ENCODE measurements at regions of chr12 and their contacts with region 1.

Region 1: GRCh38 chr12:94721173-94721572 is 70.8 kb upstream of the TMCC3 start:
- DNase-seq: peak; percentile 75
- ATAC-seq: peak; percentile 92
- H3K4me3 ChIP-seq: 0 out of 2 replicates have a peak overlapping the region, but pooled peaks have one; percentile 8
- H3K27ac ChIP-seq: peak overlapping the region; percentile 63
- H3K4me1 ChIP-seq: peaks cover 24% of the 10 kb centered on the region
- H3K27me3 ChIP-seq: no peaks in the 10 kb centered on the region
- CTCF ChIP-seq: no peak
- EP300 ChIP-seq: 0 out of 4 replicates have a peak, but pooled peaks of 1 of the 2 experiments have one; percentile 34
- POLR2A ChIP-seq: no peak
- RAD21 ChIP-seq: no peak

Region 2: GRCh38 chr12:94704452-94705306 is 16.5 kb before region 1 on chr12:
- CTCF ChIA-PET with region 1: interaction called, 12 read pairs
- POLR2A ChIA-PET with region 1: interaction called, 6 read pairs
- RAD21 ChIA-PET with region 1: interaction called, 17 read pairs
- SMC1A ChIA-PET with region 1: interaction called, 13 read pairs
- in situ Hi-C with region 1: no loop called
- intact Hi-C with region 1: no loop called
- DNase-seq: no peak
- ATAC-seq: no peak
- H3K4me3 ChIP-seq: no peak overlapping the region
- H3K27ac ChIP-seq: no peak overlapping the region
- H3K4me1 ChIP-seq: peaks cover 9% of the 10 kb centered on the region
- H3K27me3 ChIP-seq: no peaks in the 10 kb centered on the region
- CTCF ChIP-seq: no peak
- EP300 ChIP-seq: no peak
- POLR2A ChIP-seq: no peak
- RAD21 ChIP-seq: no peak

Region 3: GRCh38 chr12:94710933-94711332 is 10.2 kb before region 1 on chr12:
- CTCF ChIA-PET with region 1: interaction called, 12 read pairs
- POLR2A ChIA-PET with region 1: interaction called, 6 read pairs
- RAD21 ChIA-PET with region 1: interaction called, 17 read pairs
- SMC1A ChIA-PET with region 1: interaction called, 13 read pairs
- in situ Hi-C with region 1: no loop called
- intact Hi-C with region 1: no loop called
- DNase-seq: no peak
- ATAC-seq: peak; percentile 77
- H3K4me3 ChIP-seq: no peak overlapping the region
- H3K27ac ChIP-seq: no peak overlapping the region
- H3K4me1 ChIP-seq: peaks cover 7% of the 10 kb centered on the region
- H3K27me3 ChIP-seq: no peaks in the 10 kb centered on the region
- CTCF ChIP-seq: peak; percentile 48 to 55 (median 52); a peak in 5 of 6 replicates
- EP300 ChIP-seq: no peak
- POLR2A ChIP-seq: no peak
- RAD21 ChIP-seq: peak; percentile 54

Region 4: DNA sequence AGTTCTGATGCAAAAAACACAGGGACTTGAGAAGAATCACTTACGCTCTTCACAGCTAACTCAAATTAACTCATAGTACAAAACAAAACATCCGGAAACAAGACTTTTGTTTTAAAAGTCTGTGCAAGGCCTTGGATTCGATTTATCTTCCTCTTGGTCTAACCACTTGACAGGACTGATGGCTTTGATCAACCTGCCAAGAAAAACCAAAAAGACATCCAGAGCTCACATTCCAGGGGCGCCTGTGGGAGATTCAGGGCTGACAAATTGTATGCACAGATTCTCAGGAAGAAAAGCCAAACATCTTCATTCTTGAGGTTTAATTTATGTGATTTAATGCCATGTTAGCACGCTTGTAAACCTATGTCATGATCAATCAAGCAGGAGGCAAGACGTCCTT is 58.3 kb after region 1 on chr12:
- CTCF ChIA-PET with region 1: no interaction called
- POLR2A ChIA-PET with region 1: no interaction called
- RAD21 ChIA-PET with region 1: no interaction called
- SMC1A ChIA-PET with region 1: no interaction called
- in situ Hi-C with region 1: no loop called
- intact Hi-C with region 1: no loop called
- DNase-seq: no peak
- ATAC-seq: no peak
- H3K4me3 ChIP-seq: no peak overlapping the region
- H3K27ac ChIP-seq: no peak overlapping the region
- H3K4me1 ChIP-seq: peaks cover 5% of the 10 kb centered on the region; the same call in 1 of the 2 replicates
- H3K27me3 ChIP-seq: no peaks in the 10 kb centered on the region
- CTCF ChIP-seq: no peak
- EP300 ChIP-seq: no peak
- POLR2A ChIP-seq: no peak
- RAD21 ChIP-seq: no peak

Region 5: DNA sequence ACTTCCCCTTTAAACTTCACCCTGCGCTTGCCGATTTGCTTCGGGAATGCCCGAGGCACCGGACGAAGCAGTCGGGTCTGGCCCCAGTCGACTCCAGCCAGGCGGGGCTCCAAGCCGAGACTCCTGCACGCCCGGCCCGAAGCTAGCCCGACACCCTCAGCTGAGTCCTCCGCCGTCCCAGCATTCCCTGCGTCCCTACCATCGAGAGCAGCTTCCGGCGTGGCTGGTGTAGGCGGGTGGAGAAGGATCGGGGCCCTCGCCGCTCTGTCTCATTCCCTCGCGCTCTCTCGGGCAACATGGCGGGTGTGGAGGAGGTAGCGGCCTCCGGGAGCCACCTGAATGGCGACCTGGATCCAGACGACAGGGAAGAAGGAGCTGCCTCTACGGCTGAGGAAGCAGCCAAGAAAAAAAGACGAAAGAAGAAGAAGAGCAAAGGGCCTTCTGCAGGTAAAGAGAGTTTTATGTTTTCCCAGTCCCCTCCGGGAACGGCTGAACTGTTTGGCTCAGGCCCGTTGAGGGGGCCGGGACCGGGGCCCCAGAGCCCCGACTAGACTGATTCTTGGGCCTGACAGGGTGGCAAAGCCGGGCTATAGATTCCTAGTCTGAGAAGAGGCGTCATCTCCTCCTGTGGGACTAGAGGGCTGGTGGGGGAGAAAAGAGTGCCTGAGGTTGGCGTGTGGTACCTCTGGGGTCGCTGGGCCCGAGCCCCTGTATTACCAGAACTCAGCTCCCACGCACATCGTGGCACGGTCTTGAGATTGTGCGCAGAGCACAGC is 752.9 kb after region 1 on chr12 and contains the start of gene METAP2:
- CTCF ChIA-PET with region 1: no interaction called
- POLR2A ChIA-PET with region 1: no interaction called
- RAD21 ChIA-PET with region 1: no interaction called
- SMC1A ChIA-PET with region 1: no interaction called
- in situ Hi-C with region 1: no loop called
- intact Hi-C with region 1: no loop called
- DNase-seq: peak; percentile 84
- ATAC-seq: peak; percentile 98
- H3K4me3 ChIP-seq: peak within 1 kb of the TSS; percentile 98
- H3K27ac ChIP-seq: peak within 1 kb of the TSS; percentile 87
- H3K4me1 ChIP-seq: no peaks in the 10 kb centered on the region
- H3K27me3 ChIP-seq: no peaks in the 10 kb centered on the region
- CTCF ChIP-seq: no peak
- EP300 ChIP-seq: no peak
- POLR2A ChIP-seq: peak; percentile 99
- RAD21 ChIP-seq: no peak
- polyA plus RNA-seq, gene METAP2: 50.7 to 83.6 TPM